ENCODE measurements at regions of chr16 and their contacts with region 1.

Region 1: DNA sequence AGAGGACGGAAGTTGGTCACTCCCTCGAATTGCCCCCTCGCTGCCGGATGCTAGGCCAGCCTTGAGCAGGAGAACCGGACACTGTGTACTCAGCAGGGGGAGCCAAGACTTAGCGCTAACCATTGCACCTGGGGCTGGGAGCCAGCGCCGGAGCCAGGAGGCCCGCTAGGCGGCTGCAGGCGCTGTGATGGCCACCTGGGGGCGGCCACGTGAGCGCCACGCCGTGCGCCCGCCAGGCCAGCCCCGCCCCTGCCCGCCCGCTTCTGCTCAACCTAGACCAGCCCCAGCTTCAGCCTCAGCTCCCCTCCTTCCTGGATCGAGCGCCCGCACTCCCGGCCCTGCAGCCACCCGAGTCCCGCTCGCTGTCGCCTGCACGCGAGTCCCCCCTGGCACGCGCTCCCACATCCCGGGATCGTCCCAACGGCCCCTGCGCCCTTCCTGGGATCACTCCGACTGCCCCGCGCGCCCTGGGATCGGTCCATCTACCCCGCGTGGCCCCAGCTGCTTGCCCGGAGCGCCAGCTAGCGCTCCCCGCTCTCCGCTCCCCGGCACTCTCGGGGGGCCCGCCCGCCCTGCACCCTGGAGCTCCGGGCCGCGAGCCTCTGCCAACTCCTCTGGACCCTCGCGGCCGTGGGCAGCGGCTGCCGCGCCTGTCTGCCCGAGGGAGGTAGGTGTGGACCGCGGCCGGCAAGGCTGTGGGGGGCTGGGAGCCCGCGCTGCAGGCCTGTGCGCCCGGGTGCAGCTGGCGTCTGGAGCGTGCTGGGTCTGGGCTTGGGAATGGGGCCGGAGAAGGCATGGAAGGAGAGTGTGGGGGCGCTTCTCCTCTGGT is at the start of gene EEF2K:
- DNase-seq: peak; percentile 94
- H3K4me3 ChIP-seq: peak within 1 kb of the TSS; percentile 88 to 99 (median 92)
- H3K27ac ChIP-seq: peak within 1 kb of the TSS; percentile 70
- H3K4me1 ChIP-seq: peaks cover 18% of the 10 kb centered on the region
- H3K27me3 ChIP-seq: no peaks in the 10 kb centered on the region
- CTCF ChIP-seq: peak; percentile 49 to 71
- total RNA-seq, gene EEF2K: 16.0 to 22.8 TPM

Region 2: GRCh38 chr16:22240023-22240710 is 33.9 kb after region 1 on chr16:
- CTCF ChIA-PET with region 1: no interaction called
- dilution Hi-C with region 1: no loop called
- in situ Hi-C with region 1: no loop called
- intact Hi-C with region 1: loop called (anchors 5 kb)
- DNase-seq: no peak
- H3K4me3 ChIP-seq: no peak overlapping the region
- H3K27ac ChIP-seq: no peak overlapping the region
- H3K4me1 ChIP-seq: no peaks in the 10 kb centered on the region
- H3K27me3 ChIP-seq: no peaks in the 10 kb centered on the region
- CTCF ChIP-seq: no peak

Region 3: GRCh38 chr16:22291860-22292692 is 85.8 kb after region 1 on chr16:
- CTCF ChIA-PET with region 1: no interaction called
- dilution Hi-C with region 1: no loop called
- in situ Hi-C with region 1: loop called in 1 of 2 experiments (anchors 5 kb)
- intact Hi-C with region 1: loop called (anchors 1 kb)
- DNase-seq: no peak
- H3K4me3 ChIP-seq: no peak overlapping the region
- H3K27ac ChIP-seq: no peak overlapping the region
- H3K4me1 ChIP-seq: peaks cover 7% of the 10 kb centered on the region
- H3K27me3 ChIP-seq: no peaks in the 10 kb centered on the region
- CTCF ChIP-seq: no peak

Measured in mammary epithelial cell (primary cell).